ENCODE measurements at regions of chr1 and their contacts with region 1.

Region 1: DNA sequence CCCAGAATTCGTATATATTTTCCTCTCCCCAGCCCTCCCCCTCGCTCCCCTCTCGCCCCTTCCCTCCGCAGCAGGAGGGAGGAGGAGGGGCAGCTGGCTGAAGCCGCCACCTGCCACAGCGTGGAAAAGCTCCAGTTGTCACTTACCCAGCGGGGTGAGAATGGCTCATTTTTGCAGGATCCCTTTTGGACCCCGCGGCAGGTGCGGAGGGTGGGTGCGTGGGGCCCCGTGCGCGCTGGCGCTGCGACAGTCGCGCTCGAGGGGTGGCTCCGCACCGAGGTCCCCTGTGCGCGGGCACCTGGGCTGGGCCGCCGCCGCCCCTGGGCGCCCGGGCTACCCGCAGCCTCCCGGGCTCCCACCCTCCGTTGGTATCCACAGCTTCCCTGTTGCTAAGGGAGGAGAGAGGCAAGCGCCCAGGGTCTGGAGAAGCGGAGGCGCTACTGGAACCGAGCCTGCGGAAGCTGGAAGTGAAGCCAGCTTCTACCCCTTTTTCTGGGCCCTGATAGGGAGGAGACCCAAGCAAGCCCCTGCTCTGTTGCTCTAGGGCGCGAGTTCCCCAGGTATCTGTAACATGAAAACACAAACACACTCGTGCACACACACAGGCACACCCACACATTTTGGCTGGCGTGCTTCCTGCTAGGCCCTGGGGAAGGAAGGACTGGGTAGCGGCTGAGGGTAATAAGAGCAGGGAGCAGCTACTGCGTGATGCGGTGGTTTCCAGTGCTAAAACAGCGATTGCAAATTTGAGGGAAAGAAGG is at the start of gene ERICH3:
- DNase-seq: peak; percentile 27 to 68 (median 60)
- H3K4me3 ChIP-seq: peak within 1 kb of the TSS; percentile 21 to 68 (median 51)
- H3K27ac ChIP-seq: peak within 1 kb of the TSS in 58 of 59 donors; percentile 37 to 94 (median 80)
- H3K27me3 ChIP-seq: peaks cover 0 to 20% (median 0%) of the 10 kb centered on the region in 45 donors
- CTCF ChIP-seq: no peak
- total RNA-seq, gene ERICH3: 8.1 to 45.1 (median 31.0) TPM

Region 2: GRCh38 chr1:74422421-74423292 is 250.9 kb before region 1 on chr1:
- intact Hi-C with region 1: no loop called
- DNase-seq: no peak
- H3K4me3 ChIP-seq: no peak overlapping the region
- H3K27ac ChIP-seq: no peak overlapping the region
- H3K27me3 ChIP-seq: no peaks in the 10 kb centered on the region
- CTCF ChIP-seq: no peak

Region 3: DNA sequence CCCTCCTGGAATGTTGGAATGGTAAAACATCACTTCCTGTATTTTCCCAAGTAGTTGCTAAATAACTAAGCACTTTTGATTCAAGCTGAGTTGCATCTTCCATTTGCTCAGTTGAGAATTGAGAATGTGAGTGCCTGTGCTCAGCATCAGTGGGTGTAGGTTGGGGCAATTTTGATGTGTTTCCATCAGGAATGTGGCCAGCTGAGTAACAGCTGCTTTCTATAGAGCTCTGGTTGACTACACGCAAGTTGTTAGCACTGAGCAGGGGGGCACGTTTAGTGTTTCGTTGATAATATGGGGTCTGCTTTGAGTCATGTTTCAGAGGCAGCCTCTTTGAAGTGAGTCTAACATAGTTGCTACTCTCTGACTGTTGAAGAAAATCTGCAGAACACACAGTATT is 202.6 kb before region 1 on chr1:
- intact Hi-C with region 1: loop called in 1 of 2 experiments (anchors 5 kb)
- DNase-seq: no peak
- H3K4me3 ChIP-seq: no peak overlapping the region
- H3K27ac ChIP-seq: peak overlapping the region in 49 of 59 donors; percentile 1 to 76 (median 50)
- H3K27me3 ChIP-seq: no peaks in the 10 kb centered on the region
- CTCF ChIP-seq: no peak

Region 4: DNA sequence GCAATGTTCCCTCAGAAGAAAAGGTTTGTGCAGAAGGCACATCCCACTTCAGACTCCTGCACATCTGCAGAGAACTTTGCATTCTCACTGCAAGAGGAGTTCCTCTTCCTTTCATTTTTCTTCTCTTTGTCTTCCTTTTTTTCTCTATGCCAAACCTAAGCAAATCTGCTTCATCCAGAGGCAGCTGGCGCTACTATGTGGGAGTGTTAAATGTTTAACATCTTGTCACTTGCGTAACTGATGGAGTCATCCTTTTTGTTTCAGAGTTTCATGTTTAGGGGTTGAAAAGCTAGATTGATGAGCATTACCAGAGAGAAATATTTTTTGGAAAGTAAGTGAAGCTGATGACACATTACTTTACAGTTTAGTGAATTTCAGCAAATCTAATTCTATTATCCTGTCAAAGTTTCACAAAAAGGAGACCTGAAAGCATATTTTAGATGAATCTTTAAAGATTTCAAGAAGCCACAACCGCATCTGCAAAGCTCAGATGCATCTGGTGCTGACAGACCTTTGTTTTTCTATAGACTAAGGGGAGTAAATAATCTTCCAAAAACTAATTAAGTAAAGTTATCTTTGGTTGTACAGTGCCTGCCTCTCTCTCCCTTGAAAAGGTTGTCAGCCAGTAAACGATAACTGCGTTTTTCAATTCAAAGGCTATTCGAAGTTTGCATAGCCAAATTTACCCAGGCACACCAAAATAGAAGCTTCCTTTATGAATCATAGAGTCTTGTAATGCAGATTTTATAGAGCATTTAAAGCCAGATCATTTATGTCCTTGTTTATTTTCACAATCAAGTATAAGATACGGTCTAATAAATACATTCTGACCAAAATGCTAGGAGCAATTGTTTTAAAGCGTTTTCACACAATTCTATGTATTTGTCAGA is 159.9 kb before region 1 on chr1:
- intact Hi-C with region 1: loop called in 1 of 2 experiments (anchors 2 kb)
- DNase-seq: peak in 3 of 10 donors; percentile 40 to 53 (median 42)
- H3K4me3 ChIP-seq: no peak overlapping the region
- H3K27ac ChIP-seq: peak overlapping the region in 53 of 59 donors; percentile 9 to 89 (median 69)
- H3K27me3 ChIP-seq: no peaks in the 10 kb centered on the region
- CTCF ChIP-seq: no peak

Region 5: GRCh38 chr1:74570797-74571492 is 102.6 kb before region 1 on chr1:
- intact Hi-C with region 1: loop called in 1 of 2 experiments (anchors 2 kb)
- DNase-seq: peak in 6 of 10 donors; percentile 41 to 51 (median 46)
- H3K4me3 ChIP-seq: peak overlapping the region in 34 of 59 donors; percentile 0 to 46 (median 26)
- H3K27ac ChIP-seq: peak overlapping the region in 46 of 59 donors; percentile 3 to 84 (median 69)
- H3K27me3 ChIP-seq: peaks cover 0 to 4% (median 0%) of the 10 kb centered on the region in 45 donors
- CTCF ChIP-seq: no peak

Region 6: DNA sequence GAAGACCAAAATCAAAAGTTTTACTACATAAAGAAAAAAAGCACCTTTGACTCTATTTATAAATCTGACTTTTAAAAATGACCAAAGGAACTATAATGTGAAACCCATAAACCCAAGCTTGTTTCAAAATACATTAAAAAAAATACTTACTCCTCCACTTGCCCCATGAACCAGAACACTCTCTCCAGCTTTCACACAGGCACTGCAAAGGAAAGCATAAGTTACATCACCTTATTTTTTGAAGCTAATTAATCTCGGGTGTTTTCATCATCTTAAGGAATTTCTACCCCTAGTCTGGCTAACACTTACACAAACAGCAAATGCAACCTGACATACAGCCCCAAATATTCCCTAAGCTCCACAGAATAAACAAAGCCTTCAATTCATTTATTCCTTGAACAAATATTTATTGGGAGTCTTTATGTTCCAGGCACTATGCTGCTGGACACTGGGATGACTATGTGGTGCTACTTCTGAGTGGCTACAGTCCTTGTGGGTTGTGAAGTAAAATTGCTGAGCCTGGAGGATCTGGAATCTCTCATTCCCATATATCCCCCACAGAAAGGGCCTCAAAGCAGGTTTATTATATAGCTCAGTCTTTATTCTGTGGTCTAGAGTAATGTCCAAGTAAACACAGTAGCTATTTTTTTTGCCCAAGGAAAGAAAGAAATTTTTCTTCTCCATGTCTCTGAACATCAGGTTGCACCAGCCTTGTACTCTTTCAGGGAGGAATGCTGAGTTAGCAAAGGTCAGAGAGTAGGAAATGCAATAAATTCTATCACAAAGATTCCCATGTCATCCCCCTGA is 41.1 kb after region 1 on chr1:
- intact Hi-C with region 1: no loop called
- DNase-seq: no peak
- H3K4me3 ChIP-seq: no peak overlapping the region
- H3K27ac ChIP-seq: no peak overlapping the region
- H3K27me3 ChIP-seq: no peaks in the 10 kb centered on the region
- CTCF ChIP-seq: no peak

Measured in dorsolateral prefrontal cortex (tissue), 120 donors.